ENCODE measurements at regions of chr20 and their contacts with region 1.

Region 1: DNA sequence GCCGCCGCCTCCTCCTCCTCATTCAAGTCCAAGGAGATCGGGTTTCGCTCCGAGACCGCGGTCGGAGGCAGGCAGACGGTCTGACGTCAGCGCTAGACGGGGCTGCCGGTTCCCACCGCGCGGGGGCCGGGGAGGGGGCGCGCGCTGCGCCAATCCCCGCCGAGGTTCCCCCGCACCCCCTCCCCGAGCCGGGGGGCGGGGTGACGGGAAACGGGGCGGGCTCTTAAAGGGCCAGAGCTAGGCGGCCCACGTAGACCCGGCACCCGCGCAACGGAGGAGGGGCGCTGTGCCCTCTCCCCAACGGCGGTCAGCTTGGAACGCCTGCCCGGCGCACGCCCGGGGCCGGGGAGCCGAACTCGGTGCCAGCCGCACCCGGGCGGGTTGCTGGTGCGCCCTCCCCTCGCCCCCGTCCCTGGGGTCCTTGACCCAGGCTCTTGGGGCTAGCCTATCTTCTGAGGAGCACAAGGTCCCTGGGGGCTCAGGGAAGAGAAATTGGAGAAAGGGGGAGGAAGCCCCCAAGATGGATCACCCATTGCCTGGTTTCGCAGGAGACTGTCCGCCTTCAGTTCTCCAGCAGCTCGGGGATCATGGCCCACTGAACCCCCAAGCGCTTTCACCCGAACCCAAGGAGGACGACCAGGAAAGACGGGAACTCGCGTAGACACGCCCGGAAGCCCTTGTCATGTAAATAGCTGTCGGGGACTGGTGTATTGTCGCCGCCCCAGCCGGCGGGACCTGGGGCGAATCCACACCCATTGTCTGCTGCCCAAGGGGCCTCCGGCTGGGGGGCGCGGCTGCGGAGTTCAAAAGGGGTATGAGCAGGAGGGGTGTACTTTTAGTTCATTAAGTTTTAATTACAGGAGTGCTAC is at the start of gene PMEPA1:
- DNase-seq: peak; percentile 87 to 97 (median 91)
- ATAC-seq: peak; percentile 86
- H3K4me3 ChIP-seq: peak within 1 kb of the TSS; percentile 64 to 99
- H3K4me3 Mint-ChIP-seq: peak within 1 kb of the TSS; percentile 92
- H3K27ac ChIP-seq: peak within 1 kb of the TSS; percentile 48 to 78
- H3K27ac Mint-ChIP-seq: peak within 1 kb of the TSS; percentile 96
- H3K4me1 ChIP-seq: peaks cover 32% of the 10 kb centered on the region
- H3K4me1 Mint-ChIP-seq: peaks cover 33% of the 10 kb centered on the region
- H3K27me3 ChIP-seq: peaks cover 0 to 12% of the 10 kb centered on the region in 2 experiments
- H3K27me3 Mint-ChIP-seq: no peaks in the 10 kb centered on the region
- CTCF ChIP-seq: no peak
- total RNA-seq, gene PMEPA1: 22.2 to 22.4 TPM

Region 2: GRCh38 chr20:57473246-57474048 is 236.7 kb before region 1 on chr20:
- CTCF ChIA-PET with region 1: no interaction called
- POLR2A ChIA-PET with region 1: no interaction called
- intact Hi-C with region 1: no loop called
- DNase-seq: peak in 4 of 9 experiments; percentile 11 to 63 (median 26)
- ATAC-seq: peak; percentile 64
- H3K4me3 ChIP-seq: no peak overlapping the region
- H3K4me3 Mint-ChIP-seq: no peak overlapping the region
- H3K27ac ChIP-seq: no peak overlapping the region
- H3K27ac Mint-ChIP-seq: peak overlapping the region; percentile 37
- H3K4me1 ChIP-seq: peaks cover 30% of the 10 kb centered on the region
- H3K4me1 Mint-ChIP-seq: peaks cover 31% of the 10 kb centered on the region
- H3K27me3 ChIP-seq: no peaks in the 10 kb centered on the region
- H3K27me3 Mint-ChIP-seq: no peaks in the 10 kb centered on the region
- CTCF ChIP-seq: no peak

Region 3: DNA sequence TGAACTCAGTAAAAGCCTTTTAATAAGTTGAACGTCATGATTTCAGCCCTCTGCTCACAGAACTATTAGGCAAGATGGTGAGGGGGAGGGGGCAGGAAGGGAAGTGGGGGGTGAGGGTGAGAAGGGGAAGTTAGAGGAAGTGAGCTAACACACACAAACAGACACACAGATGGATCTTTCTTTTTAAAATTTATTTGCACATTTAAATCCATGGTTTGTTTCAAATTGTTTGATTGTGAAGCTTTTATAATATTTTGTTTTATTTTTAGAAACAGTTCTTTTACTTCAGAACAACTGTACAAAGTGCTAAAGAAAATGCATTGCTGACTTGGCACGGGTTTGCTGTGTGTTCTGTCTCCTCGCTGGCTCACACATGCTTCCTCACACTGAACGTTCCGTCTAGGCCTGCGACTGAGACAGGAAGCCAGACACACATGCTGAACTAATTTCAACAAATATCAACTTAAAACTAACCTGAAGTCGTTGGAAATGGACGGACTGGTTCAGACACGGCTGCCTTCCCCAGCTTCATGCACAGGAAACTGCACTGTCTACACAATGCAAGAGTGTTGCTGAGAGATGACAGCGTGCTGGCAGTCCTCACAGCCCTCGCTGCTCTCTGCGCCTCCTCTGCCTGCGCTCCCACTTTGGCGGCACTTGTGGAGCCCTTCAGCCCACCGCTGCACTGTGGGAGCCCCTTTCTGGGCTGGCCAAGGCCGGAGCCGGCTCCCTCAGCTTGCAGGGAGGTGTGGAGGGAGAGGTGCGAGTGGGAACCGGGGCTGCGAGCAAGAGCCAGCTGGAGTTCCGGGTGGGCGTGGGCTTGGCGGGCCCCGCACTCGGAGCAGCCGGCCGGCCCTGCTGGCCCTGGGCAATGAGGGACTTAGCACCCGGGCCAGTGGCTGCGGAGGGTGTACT is 81.9 kb before region 1 on chr20:
- CTCF ChIA-PET with region 1: interaction called, 8 read pairs
- POLR2A ChIA-PET with region 1: interaction called, 3 read pairs
- intact Hi-C with region 1: loop called (anchors 2 kb)
- DNase-seq: peak; percentile 40 to 92 (median 67)
- ATAC-seq: peak; percentile 80
- H3K4me3 ChIP-seq: peak overlapping the region; percentile 31 to 44
- H3K4me3 Mint-ChIP-seq: peak overlapping the region; percentile 94
- H3K27ac ChIP-seq: peak overlapping the region; percentile 71 to 91
- H3K27ac Mint-ChIP-seq: peak overlapping the region; percentile 99
- H3K4me1 ChIP-seq: peaks cover 61% of the 10 kb centered on the region
- H3K4me1 Mint-ChIP-seq: peaks cover 74% of the 10 kb centered on the region
- H3K27me3 ChIP-seq: no peaks in the 10 kb centered on the region
- H3K27me3 Mint-ChIP-seq: no peaks in the 10 kb centered on the region
- CTCF ChIP-seq: no peak

Region 4: DNA sequence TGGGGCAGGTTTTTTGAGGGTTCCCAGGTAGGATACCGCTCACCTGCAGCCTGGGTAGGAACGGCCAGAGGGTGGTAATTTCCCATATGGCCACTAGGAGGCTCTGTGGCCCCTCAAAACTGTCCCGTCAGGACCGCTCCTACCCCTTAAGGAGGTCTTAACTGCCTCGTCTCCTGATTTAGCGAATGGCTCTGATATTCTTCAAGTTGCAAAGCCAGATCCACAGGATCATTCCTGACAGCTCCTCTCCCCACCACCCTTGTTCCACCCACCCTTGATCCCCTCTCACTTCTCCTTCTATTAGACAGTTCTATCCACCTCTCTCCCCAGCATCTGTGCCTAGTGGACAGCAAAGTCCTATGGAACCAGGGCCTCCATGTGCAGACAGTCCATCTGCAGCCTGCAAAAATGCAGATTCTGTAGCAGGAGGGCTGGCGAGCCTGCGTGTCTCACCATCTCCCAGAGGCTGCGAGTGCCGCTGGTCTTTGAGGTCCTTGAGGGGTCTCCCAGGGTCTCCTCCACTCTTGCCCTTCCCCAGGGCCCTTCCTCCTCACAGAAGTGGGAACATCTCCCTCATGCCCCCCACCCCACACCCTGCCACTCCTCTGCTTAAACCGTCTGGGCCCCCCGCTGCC is 55.7 kb before region 1 on chr20:
- CTCF ChIA-PET with region 1: interaction called, 3 read pairs
- POLR2A ChIA-PET with region 1: no interaction called
- intact Hi-C with region 1: loop called in 1 of 2 experiments (anchors 2 kb)
- DNase-seq: peak; percentile 32 to 82 (median 62)
- ATAC-seq: peak; percentile 74
- H3K4me3 ChIP-seq: no peak overlapping the region
- H3K4me3 Mint-ChIP-seq: no peak overlapping the region
- H3K27ac ChIP-seq: no peak overlapping the region
- H3K27ac Mint-ChIP-seq: no peak overlapping the region
- H3K4me1 ChIP-seq: peaks cover 39% of the 10 kb centered on the region
- H3K4me1 Mint-ChIP-seq: peaks cover 38% of the 10 kb centered on the region
- H3K27me3 ChIP-seq: no peaks in the 10 kb centered on the region
- H3K27me3 Mint-ChIP-seq: no peaks in the 10 kb centered on the region
- CTCF ChIP-seq: peak; percentile 94

Region 5: GRCh38 chr20:57680131-57680716 is 29.9 kb before region 1 on chr20:
- CTCF ChIA-PET with region 1: interaction called, 14 read pairs
- POLR2A ChIA-PET with region 1: no interaction called
- intact Hi-C with region 1: no loop called
- DNase-seq: peak in 3 of 9 experiments; percentile 25 to 60 (median 38)
- ATAC-seq: peak; percentile 11
- H3K4me3 ChIP-seq: no peak overlapping the region
- H3K4me3 Mint-ChIP-seq: no peak overlapping the region
- H3K27ac ChIP-seq: no peak overlapping the region
- H3K27ac Mint-ChIP-seq: peak overlapping the region; percentile 25
- H3K4me1 ChIP-seq: peaks cover 23% of the 10 kb centered on the region
- H3K4me1 Mint-ChIP-seq: peaks cover 39% of the 10 kb centered on the region
- H3K27me3 ChIP-seq: no peaks in the 10 kb centered on the region
- H3K27me3 Mint-ChIP-seq: peaks cover 2% of the 10 kb centered on the region
- CTCF ChIP-seq: no peak

Region 6: DNA sequence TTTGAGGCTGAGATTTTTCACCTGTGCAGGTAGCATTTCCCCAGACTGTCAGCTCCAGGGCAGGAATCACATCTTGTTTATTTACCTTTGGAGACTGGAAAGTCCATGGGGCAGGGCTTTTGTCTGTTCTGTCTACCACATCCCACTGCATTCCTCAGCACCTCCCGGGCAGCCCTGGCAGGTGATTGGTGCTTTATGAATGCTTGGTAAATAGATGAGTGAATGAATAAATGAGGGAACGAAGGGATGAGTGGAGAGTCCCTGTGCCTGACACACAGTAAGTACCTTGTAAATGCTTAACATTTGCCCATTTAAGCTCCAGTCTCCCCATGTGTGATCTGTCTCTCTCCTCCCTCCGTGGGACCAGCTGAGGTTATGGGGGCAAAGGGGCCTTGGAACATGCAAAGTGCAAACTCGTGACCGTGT is 69.3 kb after region 1 on chr20:
- CTCF ChIA-PET with region 1: no interaction called
- POLR2A ChIA-PET with region 1: no interaction called
- intact Hi-C with region 1: no loop called
- DNase-seq: no peak
- ATAC-seq: no peak
- H3K4me3 ChIP-seq: no peak overlapping the region
- H3K4me3 Mint-ChIP-seq: no peak overlapping the region
- H3K27ac ChIP-seq: no peak overlapping the region
- H3K27ac Mint-ChIP-seq: no peak overlapping the region
- H3K4me1 ChIP-seq: no peaks in the 10 kb centered on the region
- H3K4me1 Mint-ChIP-seq: no peaks in the 10 kb centered on the region
- H3K27me3 ChIP-seq: no peaks in the 10 kb centered on the region
- H3K27me3 Mint-ChIP-seq: peaks cover 11% of the 10 kb centered on the region
- CTCF ChIP-seq: no peak

Region 7: GRCh38 chr20:58228484-58229197 is 518.5 kb after region 1 on chr20 and contains the start of gene ANKRD60:
- CTCF ChIA-PET with region 1: no interaction called
- POLR2A ChIA-PET with region 1: no interaction called
- intact Hi-C with region 1: loop called in 1 of 2 experiments (anchors 5 kb)
- DNase-seq: peak in 7 of 9 experiments; percentile 8 to 86 (median 81)
- ATAC-seq: peak; percentile 95
- H3K4me3 ChIP-seq: peak within 1 kb of the TSS in 1 of 2 experiments; percentile 27
- H3K4me3 Mint-ChIP-seq: peak within 1 kb of the TSS; percentile 67
- H3K27ac ChIP-seq: no peak within 1 kb of the TSS
- H3K27ac Mint-ChIP-seq: peak within 1 kb of the TSS; percentile 74
- H3K4me1 ChIP-seq: peaks cover 7% of the 10 kb centered on the region
- H3K4me1 Mint-ChIP-seq: peaks cover 12% of the 10 kb centered on the region
- H3K27me3 ChIP-seq: peaks cover 18 to 19% of the 10 kb centered on the region in 2 experiments
- H3K27me3 Mint-ChIP-seq: peaks cover 58% of the 10 kb centered on the region
- CTCF ChIP-seq: no peak
- total RNA-seq, gene ANKRD60: not detected

Region 8: DNA sequence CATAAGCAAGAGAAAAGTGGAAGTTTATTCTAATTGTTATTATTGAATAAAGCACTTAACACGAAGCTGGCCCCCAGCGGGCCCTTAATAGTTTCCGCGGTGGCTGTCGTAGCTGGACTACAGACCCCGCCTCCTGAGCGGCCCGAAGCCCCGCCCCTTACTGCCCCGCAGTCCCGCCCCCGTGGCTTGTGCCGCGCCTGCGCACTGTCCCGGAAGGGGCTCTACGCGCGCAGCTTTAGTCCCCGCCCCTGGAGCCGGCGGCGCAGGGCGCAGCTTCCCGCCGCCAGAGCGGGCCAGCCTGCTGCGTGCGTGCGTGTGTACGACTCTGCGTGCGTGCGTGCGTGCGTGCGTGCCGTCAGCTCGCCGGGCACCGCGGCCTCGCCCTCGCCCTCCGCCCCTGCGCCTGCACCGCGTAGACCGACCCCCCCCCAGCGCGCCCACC is 678.7 kb after region 1 on chr20 and contains the start of gene VAPB:
- CTCF ChIA-PET with region 1: no interaction called
- POLR2A ChIA-PET with region 1: no interaction called
- intact Hi-C with region 1: loop called in 1 of 2 experiments (anchors 2 kb)
- DNase-seq: peak; percentile 94 to 99 (median 97)
- ATAC-seq: peak; percentile 95
- H3K4me3 ChIP-seq: peak within 1 kb of the TSS; percentile 87 to 90
- H3K4me3 Mint-ChIP-seq: peak within 1 kb of the TSS; percentile 88
- H3K27ac ChIP-seq: peak within 1 kb of the TSS; percentile 98 to 99
- H3K27ac Mint-ChIP-seq: peak within 1 kb of the TSS; percentile 96
- H3K4me1 ChIP-seq: peaks cover 43% of the 10 kb centered on the region
- H3K4me1 Mint-ChIP-seq: peaks cover 40% of the 10 kb centered on the region
- H3K27me3 ChIP-seq: peaks cover 0 to 2% of the 10 kb centered on the region in 2 experiments
- H3K27me3 Mint-ChIP-seq: peaks cover 4% of the 10 kb centered on the region
- CTCF ChIP-seq: no peak
- total RNA-seq, gene VAPB: 29.3 to 32.3 TPM

Region 9: DNA sequence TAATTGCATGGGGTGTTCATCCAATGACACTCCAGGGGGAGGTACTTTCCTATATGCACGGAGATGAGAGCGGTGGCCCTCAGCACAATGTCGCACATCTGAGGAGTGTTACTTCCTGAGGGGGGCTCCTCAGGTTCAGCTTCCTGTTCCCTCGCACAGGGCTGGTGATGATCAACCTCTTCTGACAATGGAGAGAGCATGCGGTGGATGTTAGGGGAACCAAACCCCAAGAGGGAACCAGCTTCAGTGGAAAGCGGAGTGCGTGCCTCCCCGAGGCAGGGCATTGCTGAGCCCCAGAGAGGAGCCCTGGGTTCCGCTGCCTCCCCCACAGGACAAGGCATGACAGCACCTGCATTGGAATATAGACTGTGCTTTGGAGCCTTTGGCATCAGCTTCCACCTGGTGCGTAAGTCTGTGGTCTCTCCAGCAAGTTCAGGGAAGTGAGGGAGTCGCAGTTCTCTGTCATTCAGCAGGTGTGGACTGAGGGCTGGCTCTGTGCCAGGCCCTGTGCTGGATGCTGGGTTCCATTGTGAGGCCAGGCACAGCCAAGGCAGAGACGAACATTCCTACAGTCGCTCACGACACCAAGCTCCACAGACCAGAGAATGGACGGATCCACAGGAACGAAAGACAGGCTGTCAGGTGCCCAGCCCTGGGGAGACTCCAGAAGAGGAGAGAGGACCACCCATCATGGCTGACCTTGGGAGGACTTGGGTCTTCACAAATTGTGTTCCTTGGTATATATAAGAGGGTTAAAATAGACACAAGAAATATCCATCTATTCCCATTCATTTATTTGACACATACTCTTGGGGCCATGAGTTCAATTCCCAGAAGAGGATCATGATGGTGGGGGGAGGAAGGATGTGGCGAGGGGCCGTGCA is 1449.6 kb after region 1 on chr20:
- CTCF ChIA-PET with region 1: no interaction called
- POLR2A ChIA-PET with region 1: no interaction called
- intact Hi-C with region 1: loop called in 1 of 2 experiments (anchors 5 kb)
- DNase-seq: peak; percentile 56 to 97 (median 79)
- ATAC-seq: peak; percentile 86
- H3K4me3 ChIP-seq: peak overlapping the region; percentile 47 to 67
- H3K4me3 Mint-ChIP-seq: peak overlapping the region; percentile 83
- H3K27ac ChIP-seq: peak overlapping the region; percentile 79 to 93
- H3K27ac Mint-ChIP-seq: peak overlapping the region; percentile 98
- H3K4me1 ChIP-seq: peaks cover 69% of the 10 kb centered on the region
- H3K4me1 Mint-ChIP-seq: peaks cover 91% of the 10 kb centered on the region
- H3K27me3 ChIP-seq: no peaks in the 10 kb centered on the region
- H3K27me3 Mint-ChIP-seq: no peaks in the 10 kb centered on the region
- CTCF ChIP-seq: peak; percentile 23

Measured in CD8-positive, alpha-beta T cell (primary cell).